ENCODE measurements at regions of chr1 and their contacts with region 1.

Region 1: GRCh38 chr1:39098546-39099250 is 72.5 kb downstream of the NDUFS5 start:
- DNase-seq: peak; percentile 65
- ATAC-seq: peak; percentile 83
- H3K4me3 ChIP-seq: no peak overlapping the region
- H3K27ac ChIP-seq: no peak overlapping the region
- H3K4me1 ChIP-seq: peaks cover 18% of the 10 kb centered on the region
- H3K27me3 ChIP-seq: no peaks in the 10 kb centered on the region
- CTCF ChIP-seq: peak; percentile 83
- EP300 ChIP-seq: no peak
- POLR2A ChIP-seq: no peak
- RAD21 ChIP-seq: peak; percentile 84

Region 2: GRCh38 chr1:38929476-38929875 is 169.2 kb before region 1 on chr1:
- CTCF ChIA-PET with region 1: no interaction called
- POLR2A ChIA-PET with region 1: no interaction called
- in situ Hi-C with region 1: no loop called
- intact Hi-C with region 1: no loop called
- DNase-seq: no peak
- ATAC-seq: no peak
- H3K4me3 ChIP-seq: no peak overlapping the region
- H3K27ac ChIP-seq: no peak overlapping the region
- H3K4me1 ChIP-seq: no peaks in the 10 kb centered on the region
- H3K27me3 ChIP-seq: no peaks in the 10 kb centered on the region
- CTCF ChIP-seq: no peak
- EP300 ChIP-seq: no peak
- POLR2A ChIP-seq: no peak
- RAD21 ChIP-seq: no peak

Region 3: GRCh38 chr1:39189592-39190041 is 90.9 kb after region 1 on chr1:
- CTCF ChIA-PET with region 1: interaction called, 15 read pairs
- POLR2A ChIA-PET with region 1: no interaction called
- in situ Hi-C with region 1: loop called (anchors 5 kb)
- intact Hi-C with region 1: loop called (anchors 1 kb)
- DNase-seq: peak; percentile 31
- ATAC-seq: no peak
- H3K4me3 ChIP-seq: no peak overlapping the region
- H3K27ac ChIP-seq: no peak overlapping the region
- H3K4me1 ChIP-seq: peaks cover 33% of the 10 kb centered on the region
- H3K27me3 ChIP-seq: no peaks in the 10 kb centered on the region
- CTCF ChIP-seq: no peak
- EP300 ChIP-seq: no peak
- POLR2A ChIP-seq: no peak
- RAD21 ChIP-seq: no peak

Region 4: DNA sequence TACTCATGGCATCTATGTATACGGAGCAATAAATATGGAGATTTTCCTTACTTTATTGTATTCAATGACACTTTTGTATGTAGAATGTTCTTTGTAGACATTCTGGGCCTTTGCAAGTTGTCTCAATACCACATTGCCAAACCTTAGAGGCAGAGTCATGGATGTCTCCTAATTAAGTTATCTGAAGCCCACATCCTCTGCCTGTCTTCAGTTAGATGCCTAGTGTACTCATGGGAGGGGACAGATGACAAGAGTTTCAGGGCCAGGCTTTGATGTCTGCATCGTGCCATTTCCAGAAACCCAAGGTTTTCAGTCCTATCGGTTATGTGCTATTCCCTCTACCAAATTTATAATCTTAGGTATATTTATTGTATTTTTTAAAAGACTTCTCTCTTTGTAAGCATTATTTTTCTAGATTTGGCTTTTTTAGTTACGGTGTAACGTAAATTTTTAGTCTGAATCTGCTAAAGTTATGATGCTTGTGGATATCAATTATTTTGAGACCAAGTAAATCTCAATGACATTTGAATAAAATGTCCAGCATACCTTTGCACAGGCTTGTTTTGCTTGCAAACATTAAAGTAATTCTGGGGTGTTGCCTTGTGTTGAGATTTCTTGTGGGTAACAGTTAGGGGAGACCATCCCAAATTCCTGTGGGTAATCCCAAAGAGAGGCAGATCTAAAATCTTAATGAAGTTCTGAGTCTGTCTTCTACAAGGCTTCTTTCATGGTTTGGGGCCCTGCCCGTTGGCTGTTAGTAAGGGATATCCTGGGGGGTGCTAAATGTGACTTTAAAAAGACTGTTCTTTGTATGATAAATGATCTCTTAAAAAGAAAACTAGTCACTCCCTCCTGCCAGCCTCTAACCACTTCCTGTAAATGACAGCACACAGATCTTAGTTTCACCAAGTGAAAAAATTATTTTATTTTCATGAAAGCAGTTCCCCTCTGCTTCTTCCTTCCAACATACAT is 97.8 kb after region 1 on chr1:
- CTCF ChIA-PET with region 1: interaction called, 15 read pairs
- POLR2A ChIA-PET with region 1: no interaction called
- in situ Hi-C with region 1: loop called (anchors 5 kb)
- intact Hi-C with region 1: loop called (anchors 1 kb)
- DNase-seq: no peak
- ATAC-seq: no peak
- H3K4me3 ChIP-seq: no peak overlapping the region
- H3K27ac ChIP-seq: no peak overlapping the region
- H3K4me1 ChIP-seq: peaks cover 35% of the 10 kb centered on the region
- H3K27me3 ChIP-seq: no peaks in the 10 kb centered on the region
- CTCF ChIP-seq: no peak
- EP300 ChIP-seq: no peak
- POLR2A ChIP-seq: no peak
- RAD21 ChIP-seq: no peak

Region 5: DNA sequence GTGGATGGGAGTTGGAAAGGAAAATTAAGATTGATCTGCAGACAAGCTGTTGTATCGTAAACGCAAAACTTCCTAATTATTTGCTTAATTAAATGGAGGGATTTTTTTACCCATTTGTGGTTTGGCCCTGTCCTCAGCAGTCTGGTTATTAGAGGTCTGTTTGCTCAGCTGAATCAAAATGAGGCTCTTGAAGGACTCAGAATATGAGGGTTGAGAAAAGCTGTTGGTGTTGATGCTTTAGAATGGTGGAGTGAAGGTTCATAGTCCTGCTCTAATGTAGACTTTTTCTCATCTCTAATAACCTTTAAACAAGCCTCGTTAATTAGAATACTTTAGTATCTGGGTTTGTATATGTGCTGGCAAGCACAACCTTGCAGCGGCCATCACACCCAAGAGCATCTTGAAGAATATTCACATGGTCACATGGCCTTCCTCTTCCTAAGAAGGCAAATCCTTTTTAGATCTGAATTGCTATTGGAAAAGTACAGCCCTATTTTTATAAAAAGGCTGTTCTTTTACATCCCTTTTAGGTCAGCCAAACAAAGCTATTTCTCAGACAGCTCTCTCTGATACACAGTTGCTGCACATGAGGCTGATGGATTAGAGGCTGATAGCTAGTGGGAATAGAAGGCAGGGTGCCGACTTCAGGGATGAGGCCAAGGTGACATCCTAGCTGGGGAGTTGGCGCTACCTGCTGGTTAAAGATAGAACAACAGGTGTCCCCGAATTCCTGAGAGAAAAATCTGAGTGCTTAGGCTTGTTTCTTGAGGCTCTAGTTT is 159.6 kb after region 1 on chr1:
- CTCF ChIA-PET with region 1: interaction called, 27 read pairs
- POLR2A ChIA-PET with region 1: no interaction called
- in situ Hi-C with region 1: loop called (anchors 5 kb)
- intact Hi-C with region 1: loop called (anchors 1 kb)
- DNase-seq: peak; percentile 65
- ATAC-seq: peak; percentile 80
- H3K4me3 ChIP-seq: no peak overlapping the region
- H3K27ac ChIP-seq: no peak overlapping the region
- H3K4me1 ChIP-seq: no peaks in the 10 kb centered on the region
- H3K27me3 ChIP-seq: no peaks in the 10 kb centered on the region
- CTCF ChIP-seq: peak; percentile 91
- EP300 ChIP-seq: no peak
- POLR2A ChIP-seq: no peak
- RAD21 ChIP-seq: peak; percentile 90

Region 6: DNA sequence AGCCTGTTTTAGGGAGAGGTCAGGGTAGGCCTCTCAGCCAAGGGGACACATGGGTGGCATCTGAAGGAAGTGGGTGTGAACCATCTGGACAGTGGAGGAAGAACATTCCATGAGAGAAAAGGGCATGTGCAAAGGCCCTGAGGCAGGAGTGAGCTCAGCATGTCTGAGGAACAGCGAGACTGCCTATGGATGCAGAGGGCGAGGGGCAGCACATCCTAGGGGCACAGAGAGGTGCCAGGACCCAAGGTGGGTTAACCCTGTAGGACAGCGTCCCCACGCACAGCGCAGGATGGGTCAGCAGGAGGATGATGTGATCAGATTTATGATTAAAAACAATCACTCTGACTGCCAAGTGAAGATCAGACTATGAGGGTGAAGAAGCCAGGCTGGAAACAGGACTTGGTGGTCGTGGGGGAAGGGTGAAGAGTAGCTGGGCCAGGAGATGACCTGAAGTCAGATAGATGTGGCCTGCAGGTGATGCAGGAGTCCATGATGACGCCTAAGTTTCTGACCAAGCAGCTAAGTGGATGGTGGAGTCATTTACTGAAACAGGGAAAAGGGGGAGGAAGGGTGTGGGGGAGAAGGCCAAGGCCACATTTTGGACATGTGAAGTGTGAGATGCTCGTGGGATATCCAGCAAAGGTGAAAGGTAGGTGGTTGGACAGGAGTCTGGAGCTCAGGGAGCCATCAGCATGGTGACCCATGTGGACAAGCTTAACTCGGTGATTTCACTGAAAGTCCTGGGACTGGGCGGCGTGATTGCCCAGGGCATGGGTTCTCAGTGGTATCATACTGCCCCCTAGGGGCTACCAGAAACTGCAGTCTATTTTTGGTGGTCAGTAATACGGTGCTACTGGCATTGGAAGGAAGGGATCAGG is 440.1 kb after region 1 on chr1:
- CTCF ChIA-PET with region 1: no interaction called
- POLR2A ChIA-PET with region 1: no interaction called
- in situ Hi-C with region 1: loop called (anchors 25 kb)
- intact Hi-C with region 1: loop called (anchors 5 kb)
- DNase-seq: peak; percentile 71
- ATAC-seq: peak; percentile 99
- H3K4me3 ChIP-seq: no peak overlapping the region
- H3K27ac ChIP-seq: no peak overlapping the region
- H3K4me1 ChIP-seq: no peaks in the 10 kb centered on the region
- H3K27me3 ChIP-seq: no peaks in the 10 kb centered on the region
- CTCF ChIP-seq: peak; percentile 93
- EP300 ChIP-seq: no peak
- POLR2A ChIP-seq: no peak
- RAD21 ChIP-seq: peak; percentile 83

Measured in HepG2 (cell line).